AG04450 (cell line): ENCODE measurements at regions of chr1 and their contacts with region 1.

Region 1: GRCh38 chr1:231757101-231757404 is 130.5 kb downstream of the DISC1 start:
- DNase-seq: no peak
- H3K4me3 ChIP-seq: no peak overlapping the region
- H3K27ac ChIP-seq: no peak overlapping the region
- H3K27me3 ChIP-seq: no peaks in the 10 kb centered on the region
- CTCF ChIP-seq: no peak

Region 2: GRCh38 chr1:231340328-231341013 is 416.6 kb before region 1 on chr1:
- CTCF ChIA-PET with region 1: no interaction called
- POLR2A ChIA-PET with region 1: no interaction called
- DNase-seq: no peak
- H3K4me3 ChIP-seq: no peak overlapping the region
- H3K27ac ChIP-seq: no peak overlapping the region
- H3K27me3 ChIP-seq: no peaks in the 10 kb centered on the region
- CTCF ChIP-seq: no peak

Region 3: GRCh38 chr1:231729544-231729943 is 27.5 kb before region 1 on chr1:
- CTCF ChIA-PET with region 1: interaction called, 18 read pairs
- POLR2A ChIA-PET with region 1: no interaction called
- DNase-seq: no peak
- H3K4me3 ChIP-seq: no peak overlapping the region
- H3K27ac ChIP-seq: no peak overlapping the region
- H3K27me3 ChIP-seq: no peaks in the 10 kb centered on the region
- CTCF ChIP-seq: no peak

Region 4: DNA sequence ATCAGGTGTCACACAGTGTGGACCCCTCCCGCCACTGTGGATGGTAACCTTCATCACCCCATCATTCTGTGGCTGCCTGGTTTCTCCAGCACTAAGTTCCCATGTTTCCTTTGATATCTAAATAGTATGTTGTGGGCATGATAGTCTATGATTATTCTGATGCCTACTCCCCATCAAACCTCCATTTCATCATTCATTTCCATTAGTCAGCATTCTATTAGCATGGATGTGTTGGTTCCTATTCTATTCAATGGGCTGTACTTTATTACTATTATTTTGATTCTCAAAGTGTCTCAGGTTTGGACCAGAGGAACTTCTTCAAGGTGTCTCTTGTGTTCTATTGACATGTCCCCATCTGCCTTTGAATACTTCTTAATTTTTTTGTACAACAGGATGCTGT is 18.5 kb before region 1 on chr1:
- CTCF ChIA-PET with region 1: interaction called, 22 read pairs
- POLR2A ChIA-PET with region 1: no interaction called
- DNase-seq: no peak
- H3K4me3 ChIP-seq: no peak overlapping the region
- H3K27ac ChIP-seq: no peak overlapping the region
- H3K27me3 ChIP-seq: no peaks in the 10 kb centered on the region
- CTCF ChIP-seq: no peak

Region 5: GRCh38 chr1:231768416-231768815 is 11.4 kb after region 1 on chr1:
- CTCF ChIA-PET with region 1: interaction called, 47 read pairs
- POLR2A ChIA-PET with region 1: no interaction called
- DNase-seq: no peak
- H3K4me3 ChIP-seq: no peak overlapping the region
- H3K27ac ChIP-seq: no peak overlapping the region
- H3K27me3 ChIP-seq: no peaks in the 10 kb centered on the region
- CTCF ChIP-seq: no peak

Region 6: GRCh38 chr1:231806623-231807495 is 49.8 kb after region 1 on chr1:
- CTCF ChIA-PET with region 1: interaction called, 16 read pairs
- POLR2A ChIA-PET with region 1: no interaction called
- DNase-seq: no peak
- H3K4me3 ChIP-seq: no peak overlapping the region
- H3K27ac ChIP-seq: no peak overlapping the region
- H3K27me3 ChIP-seq: no peaks in the 10 kb centered on the region
- CTCF ChIP-seq: peak; percentile 36

Region 7: DNA sequence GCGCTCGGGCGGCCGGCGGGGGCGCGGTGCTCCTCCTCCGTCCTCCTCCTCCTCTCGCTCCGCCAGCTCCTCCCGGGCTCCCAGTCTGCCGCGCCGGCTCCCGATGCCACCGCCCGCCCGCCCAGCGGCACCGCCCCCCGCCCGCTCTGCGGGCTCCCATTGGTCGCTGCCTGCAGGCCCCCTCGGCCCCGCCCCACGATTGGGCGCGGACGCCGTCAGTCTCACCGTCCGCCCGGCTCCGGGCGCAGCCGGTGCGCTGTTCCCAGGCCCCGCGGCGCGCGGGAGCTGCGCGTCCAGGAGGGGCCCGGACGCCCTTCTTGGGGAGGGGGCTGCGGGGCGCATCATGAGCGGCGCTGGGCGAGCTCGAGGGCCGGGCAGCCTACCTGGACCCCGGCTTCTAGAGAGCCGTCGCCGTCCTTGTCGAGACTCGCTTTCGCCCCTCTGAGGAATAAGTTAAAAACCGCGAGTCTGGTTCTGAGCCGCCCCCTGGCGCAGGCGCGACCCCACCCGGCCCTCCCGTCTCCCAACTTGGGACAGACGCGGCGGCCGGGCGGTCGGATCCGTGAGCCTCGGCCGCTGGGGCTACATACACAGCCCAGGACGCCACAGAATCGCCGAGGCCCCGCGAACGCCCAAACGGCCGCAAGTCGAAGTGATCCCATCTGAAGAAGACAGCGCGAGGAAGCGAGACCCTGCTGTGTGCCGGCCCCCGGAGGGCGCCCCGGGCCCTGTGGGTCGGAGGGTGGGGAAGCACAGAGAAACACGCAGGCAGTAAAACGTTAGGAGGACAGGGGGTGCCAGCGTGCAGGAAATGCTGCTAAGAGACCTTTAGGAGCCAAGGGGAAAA is 873.2 kb after region 1 on chr1 and contains the start of gene SIPA1L2:
- CTCF ChIA-PET with region 1: interaction called, 17 read pairs
- POLR2A ChIA-PET with region 1: no interaction called
- DNase-seq: peak; percentile 73
- H3K4me3 ChIP-seq: peak within 1 kb of the TSS; percentile 81
- H3K27ac ChIP-seq: peak within 1 kb of the TSS; percentile 71
- H3K27me3 ChIP-seq: no peaks in the 10 kb centered on the region
- CTCF ChIP-seq: peak; percentile 72
- polyA plus RNA-seq, gene SIPA1L2: 63.5 and 65.0 TPM in 2 replicates